GM23248 (cell line): ENCODE measurements at regions of chr5 and their contacts with region 1.

Region 1: DNA sequence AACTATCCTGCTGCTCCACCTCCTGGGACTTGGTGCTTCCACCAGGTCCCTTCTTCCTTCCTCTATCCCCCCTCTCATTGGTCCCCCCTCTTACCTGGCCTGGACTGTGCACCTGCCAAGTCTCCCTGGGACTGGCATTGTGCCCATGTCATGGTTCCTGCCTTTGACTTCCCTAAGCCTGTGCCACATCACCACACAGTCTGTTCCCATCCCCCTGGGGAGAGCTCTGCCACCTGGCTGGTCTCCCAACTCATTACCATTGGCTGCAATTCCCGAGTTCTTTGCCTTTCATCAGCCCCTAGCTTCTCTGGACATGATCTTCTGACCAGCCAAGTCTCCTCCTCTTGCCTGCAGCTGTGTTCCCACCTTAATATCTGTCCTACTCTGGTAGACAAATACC is 180.3 kb downstream of the SREK1 start:
- DNase-seq: no peak
- H3K4me3 ChIP-seq: no peak overlapping the region
- H3K27ac ChIP-seq: no peak overlapping the region
- H3K4me1 ChIP-seq: no peaks in the 10 kb centered on the region
- H3K27me3 ChIP-seq: peaks cover 11% of the 10 kb centered on the region

Region 2: DNA sequence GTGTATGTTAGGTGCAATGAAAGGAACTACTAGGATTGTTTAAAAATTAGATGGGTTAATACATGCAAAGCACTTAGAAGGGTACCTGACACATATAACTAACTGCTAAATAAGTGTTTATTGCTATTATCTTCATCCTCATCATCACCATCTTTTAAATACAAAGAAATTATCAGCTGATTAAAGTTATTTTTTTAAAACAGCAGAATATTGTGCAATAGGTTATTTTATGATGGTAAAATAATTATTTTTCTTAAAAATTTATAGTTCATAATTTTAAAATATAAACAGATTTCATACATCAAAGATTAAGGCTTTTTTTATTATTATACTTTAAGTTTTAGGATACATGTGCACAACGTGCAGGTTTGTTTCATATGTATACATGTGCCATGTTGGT is 267.1 kb before region 1 on chr5:
- in situ Hi-C with region 1: no loop called
- DNase-seq: no peak
- H3K4me3 ChIP-seq: no peak overlapping the region
- H3K27ac ChIP-seq: no peak overlapping the region
- H3K4me1 ChIP-seq: no peaks in the 10 kb centered on the region
- H3K27me3 ChIP-seq: no peaks in the 10 kb centered on the region

Region 3: DNA sequence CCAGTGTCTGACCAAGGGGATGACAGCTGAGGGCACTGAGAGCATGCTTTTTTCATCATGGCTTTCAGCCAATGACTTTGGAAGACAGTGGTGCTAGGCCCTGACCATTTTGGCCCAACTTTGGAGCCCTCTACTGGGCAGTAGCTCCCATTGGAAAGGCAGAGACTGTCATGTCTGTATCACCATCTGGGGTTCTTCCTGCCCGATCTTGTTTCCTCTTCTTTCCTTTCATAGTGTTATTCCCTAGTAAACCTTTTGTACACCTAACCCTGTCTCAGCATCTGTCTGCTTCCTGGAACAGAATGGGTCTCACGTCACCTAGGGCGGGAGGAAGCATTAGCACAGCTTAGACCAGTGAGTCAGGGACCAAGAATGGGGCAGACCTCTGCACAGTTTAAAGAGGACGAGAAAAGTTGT is 174.4 kb after region 1 on chr5:
- in situ Hi-C with region 1: loop called (anchors 10 kb)
- DNase-seq: peak; percentile 58
- H3K4me3 ChIP-seq: no peak overlapping the region
- H3K27ac ChIP-seq: no peak overlapping the region
- H3K4me1 ChIP-seq: no peaks in the 10 kb centered on the region
- H3K27me3 ChIP-seq: no peaks in the 10 kb centered on the region